ENCODE measurements at regions of chr1 and their contacts with region 1.

Region 1: DNA sequence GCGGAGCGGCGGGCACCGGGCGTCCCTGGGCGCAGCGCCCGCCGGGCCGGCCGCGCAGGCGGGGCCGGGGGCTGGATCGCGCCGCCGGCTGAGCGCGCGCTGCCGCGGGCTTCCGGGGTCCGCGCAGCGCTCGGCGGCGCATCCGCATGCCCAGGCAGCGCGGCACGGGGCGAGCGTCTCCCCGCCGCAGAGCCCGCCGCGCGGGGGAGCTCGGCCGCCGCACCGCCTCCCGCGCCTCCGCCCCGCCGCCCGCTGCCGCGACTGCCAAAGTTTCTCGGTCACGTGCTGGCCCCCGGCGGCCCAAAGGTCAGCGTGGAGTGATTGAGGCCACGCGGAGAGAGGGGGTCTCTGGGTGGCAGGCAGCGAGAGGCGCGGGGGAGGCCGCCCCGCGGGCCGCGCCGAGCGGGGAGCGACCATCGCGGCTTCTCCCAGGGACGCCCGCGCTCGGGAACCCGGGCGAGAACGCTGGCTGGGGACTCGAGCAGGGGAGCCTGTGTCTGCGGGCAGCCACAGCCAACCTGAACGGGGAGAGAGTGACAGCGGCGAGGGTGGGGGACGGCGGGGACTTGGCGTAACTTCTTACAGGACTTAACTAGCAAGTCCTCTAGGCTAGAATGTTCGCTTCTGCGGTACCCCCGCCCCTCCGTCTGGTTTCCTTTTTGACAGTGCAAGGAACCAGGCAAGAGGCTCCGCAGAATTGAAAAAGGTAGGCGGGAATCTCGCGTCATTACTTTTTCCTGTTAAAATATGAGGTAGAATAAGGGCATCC is at the start of gene ILDR2:
- DNase-seq: peak; percentile 8 to 80 (median 40)
- ATAC-seq: peak; percentile 85
- H3K4me3 ChIP-seq: peak within 1 kb of the TSS; percentile 64
- H3K4me3 Mint-ChIP-seq: peak within 1 kb of the TSS; percentile 84
- H3K27ac ChIP-seq: no peak within 1 kb of the TSS
- H3K27ac Mint-ChIP-seq: peak within 1 kb of the TSS; percentile 6
- H3K4me1 ChIP-seq: peaks cover 15% of the 10 kb centered on the region
- H3K4me1 Mint-ChIP-seq: peaks cover 24% of the 10 kb centered on the region
- H3K27me3 ChIP-seq: peaks cover 16 to 21% of the 10 kb centered on the region in 2 experiments
- H3K27me3 Mint-ChIP-seq: peaks cover 25% of the 10 kb centered on the region
- CTCF ChIP-seq: no peak
- total RNA-seq, gene ILDR2: 0.47 to 0.67 TPM

Region 2: DNA sequence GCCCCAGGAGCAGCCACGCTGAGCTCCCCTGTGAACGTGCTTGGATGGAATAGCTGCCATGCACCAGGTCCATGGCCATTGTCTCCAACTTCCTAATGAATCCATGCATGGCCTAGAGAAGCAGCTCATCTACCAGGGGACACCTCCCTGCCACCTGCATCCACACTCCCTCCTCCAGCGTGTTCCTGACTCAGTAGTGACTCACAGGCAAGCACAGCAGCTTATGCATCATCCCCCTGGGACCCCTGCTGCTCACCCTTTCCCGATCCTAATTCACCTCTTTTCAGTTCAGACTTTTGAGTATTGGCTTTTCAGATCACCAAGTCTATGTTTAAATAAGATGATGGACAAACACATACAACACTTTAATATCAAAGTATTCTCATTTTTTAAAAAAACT is 59.6 kb before region 1 on chr1:
- CTCF ChIA-PET with region 1: interaction called, 8 read pairs
- POLR2A ChIA-PET with region 1: no interaction called
- intact Hi-C with region 1: loop called in 1 of 2 experiments (anchors 5 kb)
- DNase-seq: no peak
- ATAC-seq: no peak
- H3K4me3 ChIP-seq: no peak overlapping the region
- H3K4me3 Mint-ChIP-seq: no peak overlapping the region
- H3K27ac ChIP-seq: no peak overlapping the region
- H3K27ac Mint-ChIP-seq: no peak overlapping the region
- H3K4me1 ChIP-seq: peaks cover 4% of the 10 kb centered on the region
- H3K4me1 Mint-ChIP-seq: no peaks in the 10 kb centered on the region
- H3K27me3 ChIP-seq: peaks cover 10 to 14% of the 10 kb centered on the region in 2 experiments
- H3K27me3 Mint-ChIP-seq: peaks cover 27% of the 10 kb centered on the region
- CTCF ChIP-seq: no peak

Region 3: DNA sequence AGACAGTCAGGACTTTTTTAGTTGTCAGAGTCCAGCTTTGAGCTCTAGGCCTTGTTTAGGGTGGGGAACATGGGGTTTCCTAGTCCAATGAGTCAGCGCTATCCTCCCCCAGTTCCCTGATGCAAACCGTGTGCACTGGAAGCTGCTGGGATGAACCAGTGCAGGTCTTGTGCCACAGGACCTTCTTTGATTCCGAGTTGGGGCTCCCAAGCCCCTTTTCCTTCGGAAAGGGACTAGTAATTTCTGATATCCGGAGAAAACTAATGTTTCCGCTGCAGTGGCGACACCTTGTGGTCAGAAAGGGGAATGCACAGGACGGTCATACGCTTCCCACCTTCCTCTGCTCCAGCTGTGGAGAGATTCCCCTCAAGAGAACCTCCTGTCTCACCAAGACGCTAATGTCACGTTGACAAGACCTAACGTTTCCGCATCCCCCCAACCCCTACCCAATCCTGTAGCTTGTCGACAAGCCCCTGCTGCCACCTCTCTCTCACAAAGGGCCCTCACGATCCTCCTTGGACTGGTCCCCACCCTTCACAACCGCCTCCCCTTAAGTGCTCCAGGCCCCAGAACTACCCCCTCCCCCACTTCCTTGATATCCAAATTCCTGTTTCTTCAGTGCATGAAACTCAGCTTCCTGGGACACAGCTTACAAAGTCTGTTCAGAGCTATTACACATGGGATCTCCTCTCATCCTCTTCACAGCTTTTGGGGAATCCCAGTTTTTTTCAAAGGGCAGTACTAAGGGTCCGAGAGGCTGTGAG is 83.7 kb after region 1 on chr1:
- CTCF ChIA-PET with region 1: no interaction called
- POLR2A ChIA-PET with region 1: interaction called, 3 read pairs
- intact Hi-C with region 1: loop called (anchors 5 to 10 kb)
- DNase-seq: peak; percentile 58 to 83 (median 66)
- ATAC-seq: peak; percentile 69
- H3K4me3 ChIP-seq: no peak overlapping the region
- H3K4me3 Mint-ChIP-seq: no peak overlapping the region
- H3K27ac ChIP-seq: no peak overlapping the region
- H3K27ac Mint-ChIP-seq: no peak overlapping the region
- H3K4me1 ChIP-seq: peaks cover 4% of the 10 kb centered on the region
- H3K4me1 Mint-ChIP-seq: peaks cover 9% of the 10 kb centered on the region
- H3K27me3 ChIP-seq: no peaks in the 10 kb centered on the region
- H3K27me3 Mint-ChIP-seq: no peaks in the 10 kb centered on the region
- CTCF ChIP-seq: peak; percentile 97

Measured in CD4-positive, alpha-beta T cell (primary cell).